Natural killer cell (primary cell): ENCODE measurements at regions of chr11 and their contacts with region 1.

Region 1: DNA sequence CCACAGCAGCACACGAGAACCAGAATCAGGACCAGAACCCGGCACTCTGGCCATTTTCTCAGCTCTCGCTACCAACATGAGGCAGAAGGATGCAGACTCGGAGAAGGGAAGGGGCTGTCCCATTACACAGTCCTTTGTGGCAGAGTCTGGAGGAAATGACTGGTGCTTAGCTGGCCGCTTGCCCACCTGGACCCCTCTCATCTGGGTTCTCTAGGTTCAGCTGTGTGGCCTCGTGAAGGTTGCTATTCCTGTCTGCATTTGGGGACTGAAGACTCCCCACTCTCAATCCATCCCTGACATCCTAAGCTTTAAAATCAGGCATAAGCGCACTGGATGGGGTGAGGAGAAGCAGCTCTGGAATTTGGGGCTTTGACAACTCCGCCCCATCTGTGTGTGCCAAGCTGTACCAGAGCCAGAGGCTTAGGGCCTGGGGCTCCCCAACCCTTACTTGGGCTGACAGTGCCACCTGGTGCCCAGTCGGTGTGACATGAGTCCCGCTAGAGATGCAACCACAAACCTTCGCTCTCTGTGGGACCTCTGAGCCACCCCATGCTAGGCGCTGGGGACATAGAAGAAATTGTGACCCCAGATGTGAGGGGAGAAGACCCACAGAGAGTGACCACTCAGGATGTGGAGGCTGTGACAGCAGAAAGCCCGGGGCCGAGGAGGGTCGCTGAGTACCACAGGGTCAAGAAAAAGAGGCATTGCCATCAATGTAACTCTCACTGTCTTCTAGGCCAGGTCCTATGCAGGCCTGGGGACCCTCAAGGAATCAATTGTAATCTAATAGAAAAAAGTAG is 35.9 kb upstream of the FCHSD2 start:
- DNase-seq: peak; percentile 66 to 89
- ATAC-seq: peak; percentile 90 to 99 (median 99)
- H3K4me3 ChIP-seq: no peak overlapping the region
- H3K4me3 Mint-ChIP-seq: no peak overlapping the region
- H3K27ac ChIP-seq: no peak overlapping the region
- H3K27ac Mint-ChIP-seq: no peak overlapping the region
- H3K4me1 ChIP-seq: peaks cover 10% of the 10 kb centered on the region
- H3K4me1 Mint-ChIP-seq: peaks cover 5 to 13% of the 10 kb centered on the region in 2 donors
- H3K27me3 ChIP-seq: no peaks in the 10 kb centered on the region
- H3K27me3 Mint-ChIP-seq: peaks cover 3 to 4% of the 10 kb centered on the region in 2 donors
- CTCF ChIP-seq: peak; percentile 78

Region 2: DNA sequence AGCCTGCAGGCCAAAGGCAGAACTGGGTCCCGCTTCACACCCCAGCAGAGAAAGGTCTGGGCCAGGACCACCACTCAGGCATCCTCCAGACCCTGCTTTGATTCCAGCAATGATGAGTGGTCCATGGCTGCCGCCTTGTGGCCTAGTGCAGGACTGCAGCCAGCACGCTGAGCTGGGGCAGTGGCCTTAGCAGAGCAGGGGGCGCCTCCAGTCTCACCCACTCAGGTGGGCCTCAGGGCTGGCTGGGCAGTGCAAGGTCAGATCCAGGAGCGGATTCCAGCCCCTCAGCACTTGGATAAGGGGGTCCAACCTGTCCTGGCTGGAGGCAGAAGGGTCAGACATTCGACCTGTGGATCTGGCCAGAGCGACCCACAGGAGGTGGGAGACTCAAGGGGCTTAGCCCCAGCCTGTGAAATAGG is 494.2 kb before region 1 on chr11:
- intact Hi-C with region 1: loop called (anchors 5 kb)
- DNase-seq: peak; percentile 70 to 78
- ATAC-seq: peak; percentile 74 to 78 (median 76)
- H3K4me3 ChIP-seq: no peak overlapping the region
- H3K4me3 Mint-ChIP-seq: no peak overlapping the region
- H3K27ac ChIP-seq: no peak overlapping the region
- H3K27ac Mint-ChIP-seq: peak overlapping the region in 1 of 2 donors; percentile 61
- H3K4me1 ChIP-seq: peaks cover 5% of the 10 kb centered on the region
- H3K4me1 Mint-ChIP-seq: peaks cover 24 to 44% of the 10 kb centered on the region in 2 donors
- H3K27me3 ChIP-seq: no peaks in the 10 kb centered on the region
- H3K27me3 Mint-ChIP-seq: no peaks in the 10 kb centered on the region
- CTCF ChIP-seq: peak; percentile 91

Region 3: DNA sequence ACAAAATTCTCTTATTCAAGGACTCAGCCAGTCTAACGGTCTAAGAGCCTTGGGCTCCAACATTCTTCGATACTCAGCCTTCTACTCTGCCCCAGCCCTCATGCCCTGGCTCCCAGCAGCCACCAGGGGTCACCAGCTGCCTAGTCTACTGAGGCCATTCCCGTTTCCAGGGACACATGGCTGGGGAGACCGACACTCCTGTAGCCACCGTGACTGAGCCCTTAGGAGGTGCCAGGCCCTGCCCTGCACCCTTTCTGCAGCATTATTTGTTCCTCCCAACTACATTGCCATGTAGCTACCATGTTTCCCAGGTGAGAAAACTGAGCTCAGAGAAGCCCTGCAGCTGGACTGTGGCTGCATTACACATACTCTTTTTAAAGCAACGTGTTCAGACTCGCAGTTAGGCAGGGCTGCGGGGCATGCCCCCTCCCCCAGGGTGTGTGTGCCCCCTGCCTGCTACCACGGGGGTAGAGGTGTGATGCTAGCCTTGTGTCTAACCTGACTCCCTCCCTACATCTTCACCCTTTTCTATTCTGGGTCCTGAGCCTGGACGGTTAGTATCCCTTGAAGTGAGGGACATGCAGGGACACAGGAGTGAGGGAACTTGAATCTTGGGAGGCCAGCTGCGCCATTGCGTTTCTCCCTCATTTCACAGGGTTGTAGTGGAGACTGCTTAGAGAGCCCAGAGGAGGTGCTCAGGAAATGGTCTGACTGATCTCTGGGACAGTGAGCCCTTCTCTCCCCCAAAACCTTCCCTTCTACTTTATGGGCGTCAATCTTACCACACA is 346.3 kb before region 1 on chr11:
- intact Hi-C with region 1: loop called (anchors 1 kb)
- DNase-seq: peak in 1 of 2 donors; percentile 73
- ATAC-seq: peak; percentile 53 to 64 (median 59)
- H3K4me3 ChIP-seq: no peak overlapping the region
- H3K4me3 Mint-ChIP-seq: no peak overlapping the region
- H3K27ac ChIP-seq: no peak overlapping the region
- H3K27ac Mint-ChIP-seq: peak overlapping the region; percentile 69 to 95
- H3K4me1 ChIP-seq: peaks cover 24% of the 10 kb centered on the region
- H3K4me1 Mint-ChIP-seq: peaks cover 18 to 39% of the 10 kb centered on the region in 2 donors
- H3K27me3 ChIP-seq: no peaks in the 10 kb centered on the region
- H3K27me3 Mint-ChIP-seq: no peaks in the 10 kb centered on the region
- CTCF ChIP-seq: peak; percentile 79

Region 4: GRCh38 chr11:72924568-72925190 is 253.3 kb before region 1 on chr11:
- intact Hi-C with region 1: loop called (anchors 1 kb)
- DNase-seq: peak in 1 of 2 donors; percentile 59
- ATAC-seq: no peak
- H3K4me3 ChIP-seq: no peak overlapping the region
- H3K4me3 Mint-ChIP-seq: no peak overlapping the region
- H3K27ac ChIP-seq: no peak overlapping the region
- H3K27ac Mint-ChIP-seq: no peak overlapping the region
- H3K4me1 ChIP-seq: no peaks in the 10 kb centered on the region
- H3K4me1 Mint-ChIP-seq: no peaks in the 10 kb centered on the region
- H3K27me3 ChIP-seq: no peaks in the 10 kb centered on the region
- H3K27me3 Mint-ChIP-seq: no peaks in the 10 kb centered on the region
- CTCF ChIP-seq: peak; percentile 35

Region 5: GRCh38 chr11:73087730-73088129 is 90.2 kb before region 1 on chr11:
- intact Hi-C with region 1: no loop called
- DNase-seq: no peak
- ATAC-seq: peak in 1 of 3 donors; percentile 17
- H3K4me3 ChIP-seq: no peak overlapping the region
- H3K4me3 Mint-ChIP-seq: no peak overlapping the region
- H3K27ac ChIP-seq: no peak overlapping the region
- H3K27ac Mint-ChIP-seq: no peak overlapping the region
- H3K4me1 ChIP-seq: peaks cover 3% of the 10 kb centered on the region
- H3K4me1 Mint-ChIP-seq: peaks cover 18 to 22% of the 10 kb centered on the region in 2 donors
- H3K27me3 ChIP-seq: no peaks in the 10 kb centered on the region
- H3K27me3 Mint-ChIP-seq: no peaks in the 10 kb centered on the region
- CTCF ChIP-seq: no peak